Calu3 (cell line): ENCODE measurements at regions of chr6 and their contacts with region 1.

Region 1: GRCh38 chr6:137944793-137945498 is 77.9 kb downstream of the TNFAIP3 start:
- DNase-seq: no peak
- H3K4me3 Mint-ChIP-seq: no peak overlapping the region
- H3K27ac Mint-ChIP-seq: no peak overlapping the region
- H3K4me1 Mint-ChIP-seq: no peaks in the 10 kb centered on the region
- H3K27me3 Mint-ChIP-seq: no peaks in the 10 kb centered on the region
- CTCF ChIP-seq: peak; percentile 58

Region 2: DNA sequence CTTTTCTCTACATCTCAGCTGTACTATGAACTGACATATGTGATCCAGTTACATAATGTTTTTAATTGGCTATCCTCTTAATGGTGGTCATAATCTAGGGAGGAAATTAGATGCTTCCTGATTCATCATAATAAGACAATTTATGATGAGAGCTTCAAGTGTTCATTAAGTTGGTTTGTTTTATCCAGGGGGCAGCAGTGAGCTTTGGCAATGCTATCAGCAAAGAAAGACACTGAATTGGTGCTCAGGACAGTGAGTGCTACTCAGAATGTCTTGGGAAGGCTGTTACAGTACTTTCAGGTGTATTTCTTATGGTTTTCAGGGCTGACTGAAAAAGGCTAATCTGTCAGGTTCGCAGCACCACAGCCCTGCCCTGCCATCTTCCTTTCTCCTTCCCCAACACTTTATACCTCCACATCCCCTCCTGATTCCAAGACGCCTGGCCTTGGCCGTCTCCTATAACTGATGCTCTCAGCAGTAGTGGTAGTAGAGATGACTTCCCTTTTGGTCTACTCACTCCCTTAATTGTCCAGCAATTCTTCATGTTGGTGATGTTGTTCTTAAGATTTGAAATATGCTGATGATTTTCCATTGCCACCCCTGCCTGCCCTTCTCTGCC is 144.9 kb before region 1 on chr6:
- CTCF ChIA-PET with region 1: no interaction called
- intact Hi-C with region 1: loop called (anchors 2 kb)
- DNase-seq: peak; percentile 41
- H3K4me3 Mint-ChIP-seq: no peak overlapping the region
- H3K27ac Mint-ChIP-seq: peak overlapping the region; percentile 81
- H3K4me1 Mint-ChIP-seq: peaks cover 14% of the 10 kb centered on the region
- H3K27me3 Mint-ChIP-seq: no peaks in the 10 kb centered on the region
- CTCF ChIP-seq: peak; percentile 18